ENCODE measurements at regions of chr1 and their contacts with region 1.

Region 1: GRCh38 chr1:185291652-185292051 is 25.4 kb downstream of the IVNS1ABP start:
- DNase-seq: no peak
- H3K4me3 ChIP-seq: no peak overlapping the region
- H3K27ac ChIP-seq: no peak overlapping the region
- H3K4me1 ChIP-seq: no peaks in the 10 kb centered on the region
- H3K27me3 ChIP-seq: no peaks in the 10 kb centered on the region
- CTCF ChIP-seq: no peak

Region 2: DNA sequence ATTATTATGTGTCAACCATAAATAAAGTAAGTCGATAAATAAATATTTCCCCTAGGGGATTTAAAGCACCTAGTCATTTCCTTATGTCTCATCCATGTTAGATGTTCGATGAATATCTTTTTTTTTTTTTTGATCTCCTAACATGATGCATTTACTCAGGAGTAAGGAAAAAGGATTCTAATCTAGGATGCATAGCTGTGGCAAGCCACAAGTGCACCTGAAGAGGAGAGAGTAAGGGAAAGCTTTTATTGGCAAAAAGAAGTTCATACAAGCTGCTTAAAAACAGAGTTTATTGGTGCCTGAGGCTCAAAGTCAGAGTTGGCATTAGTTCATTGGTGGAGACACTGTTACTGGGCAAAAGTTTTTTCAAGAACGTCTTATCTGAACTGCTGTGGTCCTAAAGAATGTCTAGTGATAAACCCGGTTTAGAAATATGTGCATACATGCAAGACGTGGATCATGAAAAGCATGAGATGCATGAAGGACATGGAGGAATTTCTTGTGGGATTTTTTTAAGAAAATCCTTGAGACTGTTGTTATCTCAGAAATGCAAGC is 82.9 kb before region 1 on chr1:
- CTCF ChIA-PET with region 1: no interaction called
- dilution Hi-C with region 1: no loop called
- in situ Hi-C with region 1: no loop called
- intact Hi-C with region 1: loop called (anchors 5 kb)
- DNase-seq: peak; percentile 65
- H3K4me3 ChIP-seq: no peak overlapping the region
- H3K27ac ChIP-seq: no peak overlapping the region
- H3K4me1 ChIP-seq: peaks cover 2% of the 10 kb centered on the region
- H3K27me3 ChIP-seq: no peaks in the 10 kb centered on the region
- CTCF ChIP-seq: no peak

Measured in mammary epithelial cell (primary cell).